IMR-90 (cell line): ENCODE measurements at regions of chr17 and their contacts with region 1.

Region 1: GRCh38 chr17:39527220-39527813 is 66.0 kb downstream of the CDK12 start:
- DNase-seq: no peak
- ATAC-seq: peak; percentile 53; the same call in 1 of the 2 replicates
- H3K4me3 ChIP-seq: no peak overlapping the region
- H3K27ac ChIP-seq: no peak overlapping the region
- H3K4me1 ChIP-seq: no peaks in the 10 kb centered on the region
- H3K27me3 ChIP-seq: no peaks in the 10 kb centered on the region
- CTCF ChIP-seq: peak; percentile 32
- POLR2A ChIP-seq: no peak
- RAD21 ChIP-seq: no peak

Region 2: GRCh38 chr17:39485555-39485954 is 41.8 kb before region 1 on chr17:
- CTCF ChIA-PET with region 1: no interaction called
- POLR2A ChIA-PET with region 1: no interaction called
- dilution Hi-C with region 1: no loop called
- in situ Hi-C with region 1: no loop called
- intact Hi-C with region 1: loop called (anchors 5 kb)
- DNase-seq: peak; percentile 98
- ATAC-seq: peak; percentile 89
- H3K4me3 ChIP-seq: no peak overlapping the region
- H3K27ac ChIP-seq: peak overlapping the region; percentile 38; the same call in 1 of the 2 replicates
- H3K4me1 ChIP-seq: no peaks in the 10 kb centered on the region; the same call in 1 of the 2 replicates
- H3K27me3 ChIP-seq: no peaks in the 10 kb centered on the region
- CTCF ChIP-seq: no peak
- POLR2A ChIP-seq: no peak
- RAD21 ChIP-seq: no peak